Heart left ventricle (tissue), 16 donors: ENCODE measurements at regions of chr7 and their contacts with region 1.

Region 1: DNA sequence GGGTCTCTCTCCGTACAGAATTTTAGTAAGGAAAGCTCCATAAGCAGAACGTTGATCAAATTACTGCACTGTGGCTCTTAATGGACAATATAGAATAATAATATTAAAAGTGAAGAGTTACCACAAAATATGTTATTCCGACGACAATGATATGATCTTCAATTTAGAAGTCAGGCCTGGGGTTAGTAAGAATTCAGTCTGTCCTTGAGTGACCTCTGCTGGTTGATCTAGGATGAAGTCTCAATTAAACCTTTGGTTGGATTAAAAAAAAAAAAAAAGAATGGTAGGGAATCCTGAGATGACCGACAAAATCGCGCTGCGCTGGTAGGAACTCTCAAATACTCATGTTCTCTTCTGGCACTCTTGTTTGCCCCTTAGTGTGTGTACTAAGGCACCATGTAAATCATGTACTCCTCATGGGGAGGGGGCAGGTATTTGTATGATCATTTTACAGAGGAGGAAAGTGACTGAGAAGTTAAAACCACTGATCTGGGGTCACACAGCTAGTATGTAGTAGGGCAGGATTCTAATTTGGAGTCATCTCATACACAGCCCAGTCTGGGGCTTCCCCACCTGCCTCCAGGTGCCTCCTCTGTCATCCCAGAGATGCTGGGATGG is 161.3 kb upstream of the NPVF start:
- DNase-seq: no peak
- ATAC-seq: peak in 3 of 4 donors; percentile 22 to 49 (median 38)
- H3K4me3 ChIP-seq: no peak overlapping the region
- H3K27ac ChIP-seq: no peak overlapping the region
- H3K4me1 ChIP-seq: peaks cover 0 to 17% (median 2%) of the 10 kb centered on the region in 12 donors
- H3K27me3 ChIP-seq: peaks cover 0 to 6% (median 0%) of the 10 kb centered on the region in 9 donors
- CTCF ChIP-seq: peak; percentile 25 to 65 (median 46)
- POLR2A ChIP-seq: no peak

Region 2: GRCh38 chr7:25559581-25560367 is 170.2 kb after region 1 on chr7:
- intact Hi-C with region 1: loop called in 4 of 10 experiments (anchors 2 to 5 kb)
- DNase-seq: no peak
- ATAC-seq: peak in 1 of 4 donors; percentile 29
- H3K4me3 ChIP-seq: no peak overlapping the region
- H3K27ac ChIP-seq: no peak overlapping the region
- H3K4me1 ChIP-seq: no peaks in the 10 kb centered on the region
- H3K27me3 ChIP-seq: no peaks in the 10 kb centered on the region
- CTCF ChIP-seq: no peak
- POLR2A ChIP-seq: no peak

Region 3: DNA sequence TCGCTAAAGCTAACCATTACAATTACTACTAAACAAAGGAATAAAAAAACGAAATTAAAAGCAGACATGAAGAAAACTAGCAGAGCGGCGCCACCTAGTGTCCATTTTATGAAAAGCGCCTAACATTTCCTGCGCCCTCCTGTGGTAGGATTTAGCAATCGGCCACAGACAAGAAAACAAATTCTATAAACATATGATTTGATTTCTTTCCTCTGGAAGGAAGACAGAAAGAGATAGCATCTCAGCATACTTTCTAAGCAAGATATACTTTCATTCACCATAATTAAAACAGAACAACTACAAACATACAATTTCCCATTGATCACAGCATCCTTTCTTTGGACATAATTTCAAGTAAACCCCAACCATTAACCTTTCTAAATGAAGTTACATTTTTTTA is 176.4 kb after region 1 on chr7:
- intact Hi-C with region 1: loop called (anchors 1 to 5 kb)
- DNase-seq: peak in 3 of 5 donors; percentile 49 to 55 (median 50)
- ATAC-seq: no peak
- H3K4me3 ChIP-seq: peak overlapping the region in 1 of 12 donors; percentile 13
- H3K27ac ChIP-seq: no peak overlapping the region
- H3K4me1 ChIP-seq: peaks cover 0 to 6% (median 0%) of the 10 kb centered on the region in 12 donors
- H3K27me3 ChIP-seq: no peaks in the 10 kb centered on the region
- CTCF ChIP-seq: peak; percentile 99 to 100 (median 100)
- POLR2A ChIP-seq: no peak